HCT116 (cell line): ENCODE measurements at regions of chr14 and their contacts with region 1.

Region 1: DNA sequence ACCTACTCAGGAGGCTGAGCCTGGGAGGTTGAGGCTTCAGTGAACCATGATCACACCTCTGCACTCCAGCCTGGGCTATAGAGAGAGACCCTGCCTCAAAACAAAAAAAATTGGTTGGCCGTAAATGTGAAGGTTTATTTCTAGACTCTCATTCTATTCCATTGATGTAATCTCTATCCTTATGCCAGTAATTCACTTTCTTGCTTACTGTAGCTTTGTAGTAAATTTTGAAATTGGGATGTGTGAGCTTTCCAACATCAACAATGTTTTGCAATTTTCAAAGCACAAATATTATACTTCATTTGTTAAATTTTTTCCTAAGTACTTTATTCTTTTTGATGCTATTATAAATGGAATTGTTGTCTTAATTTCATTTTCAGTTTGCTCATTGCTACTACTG is 24.6 kb downstream of the LIN52 start:
- DNase-seq: no peak
- ATAC-seq: no peak
- H3K4me3 ChIP-seq: no peak overlapping the region
- H3K27ac ChIP-seq: no peak overlapping the region
- H3K4me1 ChIP-seq: no peaks in the 10 kb centered on the region
- H3K27me3 ChIP-seq: no peaks in the 10 kb centered on the region
- CTCF ChIP-seq: no peak
- POLR2A ChIP-seq: no peak
- RAD21 ChIP-seq: no peak

Region 2: DNA sequence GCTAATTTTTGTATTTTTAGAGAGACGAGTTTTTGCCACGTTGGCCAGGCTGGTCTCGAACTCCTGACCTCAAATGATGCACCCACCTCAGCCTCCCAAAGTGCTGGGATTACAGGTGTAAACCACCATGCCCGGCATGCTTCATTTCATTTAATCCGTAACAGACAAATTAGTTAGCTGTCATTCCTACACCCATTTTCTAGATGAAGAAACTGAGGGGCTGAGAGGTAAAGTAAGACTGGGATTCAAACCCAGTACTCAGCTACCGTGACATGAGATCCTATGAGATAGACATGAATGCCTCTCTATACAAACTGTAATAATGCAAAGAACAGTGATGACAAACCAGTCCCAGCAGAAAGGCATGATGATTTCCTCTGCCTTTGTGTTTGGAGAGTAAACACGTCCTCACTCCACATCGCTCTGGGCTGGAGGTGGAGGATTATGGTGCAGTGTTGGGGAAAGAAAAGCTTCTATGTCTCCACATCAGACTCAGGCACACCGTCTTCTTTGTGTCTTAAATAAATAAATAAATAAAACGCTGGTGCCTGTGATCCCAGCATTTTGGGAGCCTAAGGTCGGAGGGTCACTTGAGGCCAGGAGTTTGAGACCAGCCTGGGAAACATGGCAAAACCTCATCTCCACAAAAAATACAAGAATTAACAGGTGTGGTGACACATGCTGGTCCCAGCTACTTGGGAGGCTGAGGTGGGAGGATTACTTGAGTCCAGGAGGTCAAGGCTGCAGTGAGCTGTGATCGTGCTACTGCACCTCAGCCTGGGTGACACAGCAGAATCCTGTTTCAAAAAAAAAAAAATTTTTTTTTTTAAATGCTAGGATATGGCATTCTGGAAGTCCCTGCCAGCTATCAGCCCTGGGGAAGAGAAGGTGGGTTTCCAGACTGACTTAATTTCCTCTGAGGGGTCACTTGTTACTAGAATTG is 140.3 kb after region 1 on chr14:
- CTCF ChIA-PET with region 1: interaction called, 9 read pairs
- POLR2A ChIA-PET with region 1: no interaction called
- RAD21 ChIA-PET with region 1: no interaction called
- intact Hi-C with region 1: loop called (anchors 1 kb)
- DNase-seq: no peak
- ATAC-seq: no peak
- H3K4me3 ChIP-seq: no peak overlapping the region
- H3K27ac ChIP-seq: no peak overlapping the region
- H3K4me1 ChIP-seq: peaks cover 2 to 9% of the 10 kb centered on the region in 2 experiments; a peak in 2 of 4 replicates
- H3K27me3 ChIP-seq: no peaks in the 10 kb centered on the region
- CTCF ChIP-seq: no peak
- POLR2A ChIP-seq: no peak
- RAD21 ChIP-seq: no peak

Region 3: GRCh38 chr14:74293606-74294005 is 184.2 kb after region 1 on chr14:
- CTCF ChIA-PET with region 1: interaction called, 3 read pairs
- POLR2A ChIA-PET with region 1: no interaction called
- RAD21 ChIA-PET with region 1: no interaction called
- intact Hi-C with region 1: loop called (anchors 1 kb)
- DNase-seq: no peak
- ATAC-seq: no peak
- H3K4me3 ChIP-seq: no peak overlapping the region
- H3K27ac ChIP-seq: no peak overlapping the region
- H3K4me1 ChIP-seq: peaks cover under 1 to 18% of the 10 kb centered on the region in 2 experiments; a peak in 3 of 4 replicates
- H3K27me3 ChIP-seq: no peaks in the 10 kb centered on the region
- CTCF ChIP-seq: no peak
- POLR2A ChIP-seq: no peak
- RAD21 ChIP-seq: no peak